Ascending aorta (tissue), 2 donors: ENCODE measurements at regions of chr1 and their contacts with region 1.

Region 1: DNA sequence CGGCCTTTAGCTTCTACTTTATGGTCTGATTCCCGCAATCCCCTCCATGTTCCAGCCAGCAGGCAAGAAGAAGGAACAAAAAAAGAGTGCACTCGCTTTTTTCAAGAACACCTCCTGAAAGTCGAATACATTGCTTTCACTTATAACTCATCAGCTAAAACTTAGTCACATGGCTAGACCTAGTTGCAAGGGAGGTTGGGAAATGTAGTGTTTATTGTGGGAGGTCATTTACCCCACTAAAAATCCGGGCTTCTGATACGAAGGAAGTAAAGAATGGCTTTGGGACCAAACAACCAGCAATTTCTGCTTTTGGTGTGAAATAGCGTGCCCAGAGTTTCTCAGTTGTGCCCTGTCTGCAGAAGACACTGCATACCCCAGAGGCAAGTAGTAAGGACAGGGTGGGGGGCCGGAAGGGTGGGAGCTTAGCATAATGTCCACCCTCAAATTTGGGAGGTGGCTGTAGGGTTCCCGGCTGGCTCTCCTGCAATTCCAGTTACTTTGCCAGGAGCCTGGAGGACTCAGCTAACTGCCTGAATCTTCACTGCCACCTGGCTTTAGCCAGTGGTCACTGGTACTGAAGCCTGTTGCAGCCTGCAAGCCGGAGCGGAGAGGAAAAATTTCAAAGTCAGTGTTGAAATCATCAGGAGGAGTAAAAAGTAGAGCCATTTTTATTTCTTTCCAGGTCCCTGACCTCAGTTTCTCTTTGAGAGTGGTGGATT is 57.7 kb upstream of the F3 start:
- DNase-seq: no peak
- H3K4me3 ChIP-seq: no peak overlapping the region
- H3K27ac ChIP-seq: no peak overlapping the region
- H3K4me1 ChIP-seq: no peaks in the 10 kb centered on the region
- H3K27me3 ChIP-seq: no peaks in the 10 kb centered on the region
- CTCF ChIP-seq: peak in 2 of 3 experiments; percentile 27 to 57

Region 2: GRCh38 chr1:94522304-94522703 is 77.0 kb before region 1 on chr1:
- intact Hi-C with region 1: loop called (anchors 1 kb)
- DNase-seq: no peak
- H3K4me3 ChIP-seq: no peak overlapping the region
- H3K27ac ChIP-seq: no peak overlapping the region
- H3K4me1 ChIP-seq: no peaks in the 10 kb centered on the region
- H3K27me3 ChIP-seq: no peaks in the 10 kb centered on the region
- CTCF ChIP-seq: peak; percentile 30 to 79 (median 39)

Region 3: DNA sequence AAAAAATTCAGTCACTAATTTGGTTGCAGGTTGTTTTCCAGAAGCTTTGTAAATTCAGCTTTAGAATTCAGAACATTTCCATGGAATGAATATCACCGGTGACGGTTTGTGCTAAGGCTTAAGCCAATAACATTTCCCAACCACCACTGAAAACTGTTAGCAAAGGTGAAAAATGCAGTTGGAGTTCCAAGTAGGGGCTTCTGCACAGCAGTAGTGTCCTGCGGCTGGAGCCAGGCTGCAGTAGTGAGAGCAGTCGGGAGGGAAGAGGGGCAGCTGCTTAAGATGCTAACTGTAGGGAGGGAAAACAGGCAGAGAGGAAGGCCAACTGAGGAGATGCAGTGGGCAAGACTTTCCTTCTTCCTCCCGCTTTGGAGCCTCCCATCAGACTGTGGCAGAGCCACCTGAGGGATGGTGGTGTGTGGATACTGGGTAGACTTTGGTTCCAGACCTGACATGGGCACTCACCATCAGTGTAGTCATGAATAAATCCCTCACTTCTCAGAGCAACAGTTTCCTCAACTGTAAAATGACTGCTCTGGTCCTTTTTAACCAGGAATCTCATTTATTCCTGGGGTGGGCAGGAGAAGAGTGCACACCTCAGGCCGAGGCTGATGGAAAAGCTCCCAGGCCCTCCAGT is 60.9 kb before region 1 on chr1:
- intact Hi-C with region 1: no loop called
- DNase-seq: no peak
- H3K4me3 ChIP-seq: peak overlapping the region in 1 of 2 donors; percentile 100
- H3K27ac ChIP-seq: peak overlapping the region; percentile 7 to 45
- H3K4me1 ChIP-seq: peaks cover 5 to 7% of the 10 kb centered on the region in 2 donors
- H3K27me3 ChIP-seq: no peaks in the 10 kb centered on the region
- CTCF ChIP-seq: peak in 1 of 3 experiments; percentile 17

Region 4: GRCh38 chr1:94688646-94689045 is 89.4 kb after region 1 on chr1:
- intact Hi-C with region 1: no loop called
- DNase-seq: no peak
- H3K4me3 ChIP-seq: no peak overlapping the region
- H3K27ac ChIP-seq: peak overlapping the region in 1 of 2 donors; percentile 67
- H3K4me1 ChIP-seq: peaks cover 2 to 13% of the 10 kb centered on the region in 2 donors
- H3K27me3 ChIP-seq: no peaks in the 10 kb centered on the region
- CTCF ChIP-seq: no peak

Region 5: GRCh38 chr1:95023399-95024043 is 424.3 kb after region 1 on chr1:
- intact Hi-C with region 1: no loop called
- DNase-seq: no peak
- H3K4me3 ChIP-seq: peak overlapping the region in 1 of 2 donors; percentile 17
- H3K27ac ChIP-seq: peak overlapping the region; percentile 78 to 85
- H3K4me1 ChIP-seq: peaks cover 3 to 27% of the 10 kb centered on the region in 2 donors
- H3K27me3 ChIP-seq: no peaks in the 10 kb centered on the region
- CTCF ChIP-seq: no peak